AG04449 (cell line): ENCODE measurements at regions of chr2 and their contacts with region 1.

Region 1: GRCh38 chr2:30072250-30072842 is 74.5 kb upstream of the YPEL5 start:
- DNase-seq: no peak
- H3K4me3 ChIP-seq: no peak overlapping the region
- CTCF ChIP-seq: peak; percentile 85

Region 2: GRCh38 chr2:30055548-30055947 is 16.8 kb before region 1 on chr2:
- CTCF ChIA-PET with region 1: no interaction called
- POLR2A ChIA-PET with region 1: no interaction called
- DNase-seq: no peak
- H3K4me3 ChIP-seq: no peak overlapping the region
- CTCF ChIP-seq: no peak

Region 3: GRCh38 chr2:30089171-30089570 is 16.8 kb after region 1 on chr2:
- CTCF ChIA-PET with region 1: interaction called, 27 read pairs
- POLR2A ChIA-PET with region 1: no interaction called
- DNase-seq: no peak
- H3K4me3 ChIP-seq: no peak overlapping the region
- CTCF ChIP-seq: no peak